OCI-LY7 (cell line): ENCODE measurements at regions of chr2 and their contacts with region 1.

Region 1: DNA sequence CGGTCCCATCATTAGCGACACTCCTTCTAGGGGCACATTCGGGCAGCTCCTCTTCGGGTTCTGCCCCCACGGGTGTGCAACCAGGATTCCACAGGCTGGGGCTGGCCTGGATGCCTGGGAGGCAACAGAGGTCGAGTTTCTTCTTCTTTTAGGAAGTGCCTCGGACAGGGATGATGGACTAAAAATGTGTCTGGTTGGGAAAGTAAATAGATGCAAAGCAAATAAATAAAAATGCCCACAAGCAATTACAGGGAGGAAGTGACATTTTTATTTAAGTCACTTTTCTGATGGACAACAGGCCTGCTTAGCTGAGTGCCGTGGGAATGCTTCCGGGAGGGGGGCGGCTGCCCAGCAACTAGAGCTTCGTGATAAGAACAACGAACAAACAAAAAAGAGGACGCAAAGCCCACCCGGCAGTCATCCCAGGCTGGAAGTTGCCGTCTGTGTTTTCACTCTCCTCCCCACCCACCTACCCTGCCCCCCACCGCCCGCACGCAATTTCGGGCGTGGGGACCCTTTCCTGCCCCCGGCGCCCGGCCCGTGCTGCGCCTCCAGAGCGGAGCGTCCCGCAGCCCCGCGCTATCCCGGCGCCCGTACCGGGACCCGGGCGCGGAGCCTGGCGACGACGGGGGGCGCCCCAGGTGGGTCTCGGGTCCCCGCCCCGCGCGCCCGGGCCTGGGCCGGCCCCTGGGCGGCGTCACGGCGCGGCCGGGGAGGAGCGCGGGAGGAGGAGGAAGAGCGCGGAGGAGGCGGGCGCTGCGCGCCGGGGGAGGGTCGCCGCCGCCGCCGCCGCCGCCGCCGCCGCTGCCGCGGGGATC is 412 bp upstream of the NCK2 start:
- DNase-seq: peak; percentile 79
- H3K4me3 ChIP-seq: peak overlapping the region; percentile 68
- H3K27ac ChIP-seq: peak overlapping the region; percentile 37
- H3K4me1 ChIP-seq: peaks cover 59% of the 10 kb centered on the region
- CTCF ChIP-seq: 0 out of 2 replicates have a peak, but pooled peaks have one; percentile 13

Region 2: GRCh38 chr2:105627534-105627933 is 116.8 kb before region 1 on chr2:
- CTCF ChIA-PET with region 1: no interaction called
- POLR2A ChIA-PET with region 1: no interaction called
- intact Hi-C with region 1: no loop called
- DNase-seq: no peak
- H3K4me3 ChIP-seq: no peak overlapping the region
- H3K27ac ChIP-seq: no peak overlapping the region
- H3K4me1 ChIP-seq: no peaks in the 10 kb centered on the region
- CTCF ChIP-seq: no peak

Region 3: GRCh38 chr2:105732101-105732500 is 12.2 kb before region 1 on chr2:
- CTCF ChIA-PET with region 1: interaction called, 6 read pairs
- POLR2A ChIA-PET with region 1: interaction called, 18 read pairs
- intact Hi-C with region 1: no loop called
- DNase-seq: no peak
- H3K4me3 ChIP-seq: peak overlapping the region; percentile 3
- H3K27ac ChIP-seq: no peak overlapping the region
- H3K4me1 ChIP-seq: peaks cover 64% of the 10 kb centered on the region
- CTCF ChIP-seq: no peak

Region 4: DNA sequence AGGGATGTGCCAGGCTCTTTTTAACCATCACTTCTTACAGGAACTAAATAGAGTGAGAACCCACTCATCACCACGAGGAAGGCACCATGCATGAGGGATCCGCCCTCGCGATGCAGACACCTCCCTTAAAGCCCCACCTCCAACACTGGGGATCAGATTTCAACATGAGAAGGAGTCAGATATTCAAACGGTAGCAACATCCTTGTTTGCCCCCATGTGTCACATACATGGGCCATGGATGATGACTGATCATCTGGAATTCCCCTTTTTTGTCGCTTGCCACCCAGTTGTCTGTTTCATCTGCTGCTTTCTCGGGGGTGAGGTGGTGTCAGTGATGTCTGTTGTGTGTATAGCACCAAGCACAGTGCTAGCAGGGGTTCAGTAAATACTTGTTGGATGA is 58.3 kb after region 1 on chr2:
- CTCF ChIA-PET with region 1: no interaction called
- POLR2A ChIA-PET with region 1: interaction called, 11 read pairs
- intact Hi-C with region 1: no loop called
- DNase-seq: peak; percentile 79
- H3K4me3 ChIP-seq: peak overlapping the region; percentile 35
- H3K27ac ChIP-seq: peak overlapping the region; percentile 52
- H3K4me1 ChIP-seq: peaks cover 69% of the 10 kb centered on the region
- CTCF ChIP-seq: no peak

Region 5: DNA sequence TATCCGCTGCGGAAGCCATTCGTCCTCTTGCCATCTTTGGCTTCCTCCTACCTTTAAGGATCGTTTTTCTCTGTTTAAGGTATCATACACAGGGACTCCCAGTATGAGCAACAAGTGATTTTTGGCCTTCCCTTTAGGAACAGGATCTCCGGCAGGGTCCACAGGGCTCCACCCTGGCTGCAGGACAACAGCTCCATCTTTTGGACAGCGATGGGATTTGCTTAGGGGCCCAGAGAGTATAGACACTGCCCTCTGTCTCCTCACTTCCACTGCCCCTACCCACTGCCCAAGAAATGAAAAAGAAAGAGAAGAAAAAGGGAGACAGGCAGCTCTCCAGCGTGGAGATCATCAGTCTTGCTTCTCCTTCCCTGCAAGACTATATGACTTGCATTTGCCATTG is 225.3 kb after region 1 on chr2:
- CTCF ChIA-PET with region 1: no interaction called
- POLR2A ChIA-PET with region 1: no interaction called
- intact Hi-C with region 1: loop called (anchors 5 kb)
- DNase-seq: peak; percentile 35
- H3K4me3 ChIP-seq: no peak overlapping the region
- H3K27ac ChIP-seq: no peak overlapping the region
- H3K4me1 ChIP-seq: peaks cover 7% of the 10 kb centered on the region
- CTCF ChIP-seq: peak; percentile 73

Region 6: DNA sequence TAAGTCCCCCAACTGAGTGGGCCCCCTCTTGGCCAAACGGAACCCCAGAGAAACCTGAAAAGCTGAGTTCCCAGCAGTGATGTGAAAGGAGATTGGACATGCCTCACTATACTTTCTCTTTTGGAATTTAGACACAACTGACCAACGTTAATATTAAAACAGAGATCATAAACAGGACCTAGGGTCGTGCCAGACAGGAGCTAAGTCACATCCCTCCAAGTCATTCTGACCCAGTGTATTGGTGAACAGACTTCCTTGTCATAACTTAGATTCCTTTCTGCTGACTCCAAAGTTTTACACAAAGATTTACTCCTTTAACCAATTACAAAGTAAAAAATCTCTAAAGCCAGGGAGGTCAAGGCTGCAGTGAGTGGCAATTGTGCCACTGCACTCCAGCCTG is 402.9 kb after region 1 on chr2:
- CTCF ChIA-PET with region 1: no interaction called
- POLR2A ChIA-PET with region 1: no interaction called
- intact Hi-C with region 1: no loop called
- DNase-seq: no peak
- H3K4me3 ChIP-seq: no peak overlapping the region
- H3K27ac ChIP-seq: no peak overlapping the region
- H3K4me1 ChIP-seq: no peaks in the 10 kb centered on the region
- CTCF ChIP-seq: no peak

Region 7: GRCh38 chr2:107107351-107107750 is 1363.1 kb after region 1 on chr2:
- CTCF ChIA-PET with region 1: no interaction called
- POLR2A ChIA-PET with region 1: no interaction called
- intact Hi-C with region 1: no loop called
- DNase-seq: no peak
- H3K4me3 ChIP-seq: no peak overlapping the region
- H3K27ac ChIP-seq: no peak overlapping the region
- H3K4me1 ChIP-seq: no peaks in the 10 kb centered on the region
- CTCF ChIP-seq: no peak